ENCODE measurements at regions of chr5 and their contacts with region 1.

Region 1: GRCh38 chr5:66757188-66757833 is 161.1 kb downstream of the MAST4 start:
- DNase-seq: no peak
- ATAC-seq: no peak
- H3K4me3 ChIP-seq: no peak overlapping the region
- H3K27ac ChIP-seq: no peak overlapping the region
- H3K4me1 ChIP-seq: no peaks in the 10 kb centered on the region
- H3K27me3 ChIP-seq: peaks cover 0 to 3% (median 0%) of the 10 kb centered on the region in 3 donors
- CTCF ChIP-seq: peak; percentile 37

Region 2: GRCh38 chr5:66306105-66306843 is 451.0 kb before region 1 on chr5:
- intact Hi-C with region 1: loop called (anchors 5 kb)
- DNase-seq: no peak
- ATAC-seq: peak; percentile 54 to 92 (median 85)
- H3K4me3 ChIP-seq: no peak overlapping the region
- H3K27ac ChIP-seq: no peak overlapping the region
- H3K4me1 ChIP-seq: no peaks in the 10 kb centered on the region
- H3K27me3 ChIP-seq: peaks cover 0 to 5% (median 0%) of the 10 kb centered on the region in 3 donors
- CTCF ChIP-seq: peak; percentile 65

Measured in psoas muscle (tissue), 8 donors.